Activated CD8-positive, alpha-beta memory T cell treated with anti-CD3 and anti-CD28 coated beads, Interleukin-2, amount 10 ng/mL, durations not matched to agents 7 days and 5 days (primary cell): ENCODE measurements at regions of chr22 and their contacts with region 1.

Region 1: GRCh38 chr22:40177738-40178416 is at the start of gene TNRC6B:
- DNase-seq: peak; percentile 90
- ATAC-seq: peak; percentile 83
- H3K4me3 Mint-ChIP-seq: peak within 1 kb of the TSS; percentile 94
- H3K27ac Mint-ChIP-seq: peak within 1 kb of the TSS; percentile 92
- H3K4me1 Mint-ChIP-seq: peaks cover 49% of the 10 kb centered on the region
- H3K27me3 Mint-ChIP-seq: no peaks in the 10 kb centered on the region
- total RNA-seq, gene TNRC6B: 40.0 to 72.5 TPM

Region 2: DNA sequence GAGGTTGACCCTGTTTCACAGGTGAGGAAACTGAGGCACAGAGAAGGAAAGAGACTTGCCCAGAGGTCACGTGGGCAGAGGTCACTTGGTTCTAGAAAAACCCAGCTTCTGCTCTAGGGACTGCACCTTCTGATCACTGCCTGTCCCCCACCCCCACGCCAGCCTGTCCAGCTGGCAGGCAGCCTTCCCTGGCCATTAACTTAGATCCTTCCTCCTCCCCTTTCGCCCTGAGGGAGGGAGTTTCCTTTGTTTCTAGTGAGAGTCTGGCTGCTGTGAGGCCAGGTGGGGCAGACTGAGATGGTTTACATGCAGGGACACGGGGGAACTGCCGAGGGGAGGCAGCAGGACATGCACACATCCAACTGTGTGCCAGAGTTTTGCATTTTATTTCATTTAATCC is 179.9 kb before region 1 on chr22:
- CTCF ChIA-PET with region 1: no interaction called
- DNase-seq: no peak
- ATAC-seq: no peak
- H3K4me3 Mint-ChIP-seq: no peak overlapping the region
- H3K27ac Mint-ChIP-seq: no peak overlapping the region
- H3K4me1 Mint-ChIP-seq: peaks cover 5% of the 10 kb centered on the region
- H3K27me3 Mint-ChIP-seq: peaks cover 55% of the 10 kb centered on the region

Region 3: GRCh38 chr22:40044102-40044869 is 133.6 kb before region 1 on chr22:
- CTCF ChIA-PET with region 1: interaction called, 10 read pairs
- DNase-seq: peak; percentile 99
- ATAC-seq: peak; percentile 90
- H3K4me3 Mint-ChIP-seq: peak overlapping the region; percentile 84
- H3K27ac Mint-ChIP-seq: peak overlapping the region; percentile 97
- H3K4me1 Mint-ChIP-seq: peaks cover 37% of the 10 kb centered on the region
- H3K27me3 Mint-ChIP-seq: peaks cover 6% of the 10 kb centered on the region

Region 4: GRCh38 chr22:40156001-40156516 is 21.8 kb before region 1 on chr22:
- CTCF ChIA-PET with region 1: no interaction called
- DNase-seq: peak; percentile 46
- ATAC-seq: peak; percentile 47
- H3K4me3 Mint-ChIP-seq: no peak overlapping the region
- H3K27ac Mint-ChIP-seq: peak overlapping the region; percentile 41
- H3K4me1 Mint-ChIP-seq: peaks cover 15% of the 10 kb centered on the region
- H3K27me3 Mint-ChIP-seq: no peaks in the 10 kb centered on the region